ENCODE measurements at regions of chr3 and their contacts with region 1.

Region 1: GRCh38 chr3:136752422-136753325 is 496 bp upstream of the STAG1 start:
- DNase-seq: peak; percentile 99 to 100 (median 100)
- ATAC-seq: peak; percentile 97 to 98
- H3K4me3 ChIP-seq: peak overlapping the region; percentile 46
- H3K27ac ChIP-seq: peak overlapping the region; percentile 99
- H3K4me1 ChIP-seq: peaks cover 9% of the 10 kb centered on the region
- H3K27me3 ChIP-seq: no peaks in the 10 kb centered on the region

Region 2: DNA sequence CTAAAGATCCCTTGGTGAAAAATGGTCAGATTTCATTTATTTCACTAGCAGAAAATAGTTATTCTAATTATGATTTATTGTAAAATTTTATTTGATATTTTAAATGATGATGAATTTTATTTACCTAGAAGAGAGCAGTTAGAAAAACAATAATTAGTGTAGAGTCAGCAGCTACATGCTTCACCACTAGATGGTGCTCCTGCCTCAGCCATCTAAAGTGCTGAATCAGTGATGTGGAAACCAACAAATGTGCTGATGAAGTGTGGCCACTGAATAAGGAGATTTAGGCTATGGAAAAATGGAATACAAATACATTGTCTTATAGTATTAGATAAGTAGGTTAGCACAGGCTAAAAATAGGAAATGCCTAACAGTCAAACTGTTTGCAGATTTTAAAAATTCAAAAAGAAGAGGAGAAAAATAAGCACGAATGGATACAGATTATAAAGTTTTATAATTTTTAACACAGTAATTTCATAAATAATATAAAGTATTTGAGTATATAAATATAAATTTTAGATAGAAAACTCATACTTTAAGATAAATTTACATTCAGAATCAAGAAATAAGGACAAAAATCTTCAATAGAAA is 677.4 kb before region 1 on chr3:
- intact Hi-C with region 1: loop called in 3 of 4 experiments (anchors 5 to 10 kb)
- DNase-seq: peak in 2 of 3 donors; percentile 57 to 85
- ATAC-seq: peak; percentile 80 to 83
- H3K4me3 ChIP-seq: no peak overlapping the region
- H3K27ac ChIP-seq: no peak overlapping the region
- H3K4me1 ChIP-seq: peaks cover 5% of the 10 kb centered on the region
- H3K27me3 ChIP-seq: no peaks in the 10 kb centered on the region

Region 3: DNA sequence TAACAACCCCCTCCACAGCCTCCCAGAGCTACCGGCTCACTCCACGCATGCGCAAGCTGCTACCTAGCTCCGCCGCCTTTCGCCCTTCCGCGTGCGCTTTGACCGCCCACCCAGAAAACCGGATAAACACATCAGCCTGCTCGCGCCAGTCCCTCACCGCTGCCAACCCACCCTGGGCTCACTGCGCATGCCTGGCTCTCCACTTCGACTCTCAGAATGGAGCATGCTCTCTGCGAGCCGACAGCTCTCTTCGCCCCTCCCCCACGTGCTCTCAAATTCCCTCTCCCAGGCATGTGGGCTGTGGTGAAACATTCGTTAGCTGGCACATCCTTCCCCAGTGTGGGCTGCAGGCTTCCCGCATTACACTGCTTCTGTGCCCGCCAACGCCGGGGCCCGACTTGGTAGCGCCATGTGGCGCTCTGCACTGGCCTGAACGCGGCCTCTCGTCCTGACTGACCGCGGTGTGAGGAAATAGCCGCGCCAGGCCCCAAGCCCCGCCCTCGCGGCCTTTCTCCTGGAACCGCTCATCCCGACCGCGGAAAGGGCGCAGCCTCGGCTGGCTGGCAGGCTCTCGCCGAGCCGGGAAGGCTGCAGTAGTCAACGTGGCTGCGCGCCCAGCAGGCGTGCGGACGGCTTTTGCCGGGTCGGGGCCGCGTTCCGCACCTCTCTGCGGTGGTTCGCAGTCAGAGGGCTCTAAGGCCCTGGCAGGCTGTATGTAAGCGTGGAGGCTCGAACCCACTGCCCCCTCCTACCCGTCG is 556.1 kb before region 1 on chr3:
- intact Hi-C with region 1: loop called in 1 of 4 experiments (anchors 5 kb)
- DNase-seq: peak; percentile 99 to 100 (median 99)
- ATAC-seq: peak; percentile 94 to 95
- H3K4me3 ChIP-seq: peak overlapping the region; percentile 91
- H3K27ac ChIP-seq: peak overlapping the region; percentile 96
- H3K4me1 ChIP-seq: no peaks in the 10 kb centered on the region
- H3K27me3 ChIP-seq: no peaks in the 10 kb centered on the region

Region 4: GRCh38 chr3:136390574-136390973 is 362.1 kb before region 1 on chr3:
- intact Hi-C with region 1: loop called in 1 of 4 experiments (anchors 5 kb)
- DNase-seq: no peak
- ATAC-seq: peak; percentile 83 to 96
- H3K4me3 ChIP-seq: no peak overlapping the region
- H3K27ac ChIP-seq: no peak overlapping the region
- H3K4me1 ChIP-seq: no peaks in the 10 kb centered on the region
- H3K27me3 ChIP-seq: no peaks in the 10 kb centered on the region

Region 5: DNA sequence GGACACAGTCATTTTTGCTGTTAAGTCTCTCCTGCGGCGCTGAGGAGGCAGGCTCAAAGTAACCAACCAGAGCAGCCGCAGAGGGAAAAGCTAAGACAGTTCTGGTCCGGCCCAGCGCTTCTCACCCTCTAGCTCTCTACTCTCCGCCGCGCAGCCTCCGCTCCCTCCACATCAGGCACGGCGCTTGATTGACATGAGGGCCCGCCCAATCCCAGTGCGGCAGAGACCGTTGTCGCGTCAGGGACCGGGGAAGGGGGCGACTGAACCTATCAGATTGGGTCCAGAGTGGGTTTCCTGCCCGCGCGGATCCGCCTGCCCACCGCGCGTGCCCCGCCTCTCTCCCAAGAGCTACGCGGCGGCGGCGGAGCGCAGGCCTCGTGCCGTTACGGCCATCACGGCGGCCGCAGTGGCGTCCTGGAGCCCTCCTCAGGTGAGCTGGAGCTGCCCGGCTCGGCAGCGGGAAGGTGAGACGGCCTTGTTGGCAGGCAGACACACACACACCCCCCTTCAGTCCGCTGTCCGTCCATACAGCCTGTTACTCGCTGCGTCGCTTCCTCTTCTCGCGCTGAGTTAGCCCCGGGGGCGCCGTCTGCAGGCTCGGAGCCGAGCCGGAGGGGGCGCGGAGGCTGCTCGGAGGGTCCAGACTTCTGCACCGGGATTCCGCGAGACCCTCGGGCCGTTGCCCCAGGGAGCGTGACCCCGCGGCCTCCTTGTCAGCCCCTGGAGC is 109.4 kb after region 1 on chr3 and contains the start of gene NCK1:
- intact Hi-C with region 1: loop called in 2 of 4 experiments (anchors 5 to 10 kb)
- DNase-seq: peak; percentile 99 to 100 (median 100)
- ATAC-seq: peak; percentile 100
- H3K4me3 ChIP-seq: peak within 1 kb of the TSS; percentile 63
- H3K27ac ChIP-seq: peak within 1 kb of the TSS; percentile 84
- H3K4me1 ChIP-seq: no peaks in the 10 kb centered on the region
- H3K27me3 ChIP-seq: no peaks in the 10 kb centered on the region
- total RNA-seq, gene NCK1: 21.2 to 38.9 (median 27.9) TPM

Region 6: GRCh38 chr3:137013955-137014688 is 261.4 kb after region 1 on chr3:
- intact Hi-C with region 1: loop called (anchors 2 to 5 kb)
- DNase-seq: peak; percentile 89 to 95 (median 94)
- ATAC-seq: peak; percentile 94 to 97
- H3K4me3 ChIP-seq: peak overlapping the region; percentile 82
- H3K27ac ChIP-seq: peak overlapping the region; percentile 82
- H3K4me1 ChIP-seq: no peaks in the 10 kb centered on the region
- H3K27me3 ChIP-seq: no peaks in the 10 kb centered on the region

Measured in right cardiac atrium (tissue), 5 donors.